IMR-90 (cell line): ENCODE measurements at regions of chr13 and their contacts with region 1.

Region 1: DNA sequence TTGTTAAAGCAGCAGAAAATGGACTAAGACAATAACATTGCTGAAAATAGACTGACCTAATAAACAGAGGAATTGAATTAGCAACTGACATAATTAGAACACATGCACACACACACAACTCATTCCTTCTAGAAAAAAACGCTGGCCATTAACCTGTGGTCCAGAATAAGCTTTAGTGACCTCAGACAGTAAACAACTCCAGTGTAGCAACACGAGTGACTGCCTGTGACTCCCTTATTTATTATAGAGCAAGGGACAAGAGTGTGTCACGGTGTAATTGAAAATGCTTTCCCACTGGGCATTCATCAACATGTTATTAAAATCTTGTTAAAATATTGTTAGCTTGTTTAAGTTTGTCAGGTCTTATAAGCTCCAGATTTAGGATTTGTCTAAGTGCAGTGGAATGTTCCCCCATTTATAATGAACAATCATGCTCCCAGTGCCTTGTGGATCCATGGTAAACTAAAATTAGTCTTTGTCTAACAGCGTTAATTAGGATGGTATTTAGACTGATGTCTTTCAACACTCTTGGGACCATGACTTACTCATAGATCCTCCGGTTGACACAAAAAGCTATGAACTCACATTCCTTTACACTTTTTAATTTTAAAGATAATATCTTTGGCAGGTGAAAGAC is 111.7 kb upstream of the IRS2 start:
- DNase-seq: no peak
- ATAC-seq: no peak
- H3K4me3 ChIP-seq: no peak overlapping the region
- H3K27ac ChIP-seq: no peak overlapping the region
- H3K4me1 ChIP-seq: no peaks in the 10 kb centered on the region
- H3K27me3 ChIP-seq: no peaks in the 10 kb centered on the region; the same call in 1 of the 2 replicates
- CTCF ChIP-seq: no peak
- POLR2A ChIP-seq: no peak
- RAD21 ChIP-seq: no peak

Region 2: DNA sequence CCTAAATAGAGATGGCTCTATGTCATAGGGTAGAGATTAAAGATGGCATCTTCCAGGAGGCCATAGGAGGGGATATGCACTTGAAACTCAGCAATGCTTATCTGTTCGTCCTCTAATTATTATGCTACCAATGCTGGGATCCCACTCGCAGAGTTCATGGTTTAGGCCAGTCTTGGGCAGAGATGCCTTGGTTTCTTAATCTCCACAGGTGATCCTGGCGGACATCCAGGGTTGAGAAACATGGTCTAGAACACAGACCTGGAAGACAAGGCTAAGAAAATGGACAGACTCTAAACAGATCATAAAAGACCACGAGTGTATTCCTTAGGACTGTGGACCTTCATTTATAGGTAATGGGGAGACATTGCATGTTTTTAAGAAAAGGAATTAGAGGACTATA is 41.8 kb before region 1 on chr13:
- CTCF ChIA-PET with region 1: no interaction called
- POLR2A ChIA-PET with region 1: no interaction called
- dilution Hi-C with region 1: no loop called
- in situ Hi-C with region 1: no loop called
- intact Hi-C with region 1: loop called (anchors 1 kb)
- DNase-seq: no peak
- ATAC-seq: no peak
- H3K4me3 ChIP-seq: no peak overlapping the region
- H3K27ac ChIP-seq: no peak overlapping the region
- H3K4me1 ChIP-seq: no peaks in the 10 kb centered on the region
- H3K27me3 ChIP-seq: peaks cover 11% of the 10 kb centered on the region
- CTCF ChIP-seq: no peak
- POLR2A ChIP-seq: no peak
- RAD21 ChIP-seq: no peak

Region 3: DNA sequence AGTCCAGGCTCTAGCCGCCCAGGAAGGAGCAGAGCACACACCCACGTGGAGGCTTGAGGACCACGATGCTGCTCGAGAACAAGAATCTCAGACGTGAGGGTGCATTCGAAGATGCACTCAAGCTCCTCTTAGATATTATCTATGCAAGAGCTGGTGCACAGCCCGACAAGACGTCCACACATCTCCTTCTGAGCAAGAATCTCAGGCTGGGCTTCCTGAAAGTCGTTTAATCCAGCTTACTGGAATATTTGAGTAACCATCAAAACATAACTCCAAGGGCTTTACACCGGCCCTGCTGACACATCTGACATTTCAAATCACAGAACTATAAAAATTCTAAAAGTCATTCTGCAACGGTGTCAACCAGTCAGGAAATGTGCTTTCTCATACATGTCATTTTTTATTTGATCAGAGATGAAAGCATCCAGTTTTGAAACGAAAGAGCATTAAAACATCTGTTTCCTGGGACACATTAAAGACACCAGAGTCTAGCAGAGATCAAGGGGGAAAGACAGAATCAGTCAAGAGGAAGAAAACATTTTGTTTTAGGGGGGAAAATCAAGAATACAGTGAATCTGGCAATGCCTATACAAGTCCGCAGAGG is 66.0 kb after region 1 on chr13:
- CTCF ChIA-PET with region 1: no interaction called
- POLR2A ChIA-PET with region 1: no interaction called
- dilution Hi-C with region 1: no loop called
- in situ Hi-C with region 1: no loop called
- intact Hi-C with region 1: no loop called
- DNase-seq: no peak
- ATAC-seq: no peak
- H3K4me3 ChIP-seq: no peak overlapping the region
- H3K27ac ChIP-seq: no peak overlapping the region
- H3K4me1 ChIP-seq: no peaks in the 10 kb centered on the region
- H3K27me3 ChIP-seq: no peaks in the 10 kb centered on the region
- CTCF ChIP-seq: no peak
- POLR2A ChIP-seq: no peak
- RAD21 ChIP-seq: no peak

Region 4: GRCh38 chr13:110089815-110090214 is 191.7 kb after region 1 on chr13:
- CTCF ChIA-PET with region 1: no interaction called
- POLR2A ChIA-PET with region 1: no interaction called
- dilution Hi-C with region 1: no loop called
- in situ Hi-C with region 1: no loop called
- intact Hi-C with region 1: loop called (anchors 10 kb)
- DNase-seq: no peak
- ATAC-seq: no peak
- H3K4me3 ChIP-seq: no peak overlapping the region
- H3K27ac ChIP-seq: no peak overlapping the region
- H3K4me1 ChIP-seq: peaks cover 1% of the 10 kb centered on the region
- H3K27me3 ChIP-seq: no peaks in the 10 kb centered on the region
- CTCF ChIP-seq: peak; percentile 31
- POLR2A ChIP-seq: no peak
- RAD21 ChIP-seq: no peak

Region 5: DNA sequence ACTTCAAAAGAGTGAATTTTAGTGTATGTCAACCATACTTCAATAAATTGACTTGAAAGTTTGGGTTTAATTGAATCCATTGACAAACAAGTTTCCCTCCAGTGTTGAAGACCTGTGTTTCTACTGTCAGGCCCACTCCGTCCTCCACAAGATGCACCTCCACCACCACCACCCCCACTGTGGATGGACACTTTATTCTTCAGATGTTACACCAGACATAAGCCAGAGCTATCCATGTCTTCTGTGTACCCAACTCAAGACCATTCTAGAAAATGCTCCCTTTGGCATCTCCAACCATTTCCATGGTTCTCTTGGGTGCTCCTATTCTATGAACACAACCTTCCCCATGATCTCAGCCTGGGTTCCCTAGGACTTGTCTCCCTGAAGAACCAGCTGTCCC is 201.8 kb after region 1 on chr13:
- CTCF ChIA-PET with region 1: no interaction called
- POLR2A ChIA-PET with region 1: no interaction called
- dilution Hi-C with region 1: no loop called
- in situ Hi-C with region 1: no loop called
- intact Hi-C with region 1: no loop called
- DNase-seq: no peak
- ATAC-seq: no peak
- H3K4me3 ChIP-seq: no peak overlapping the region
- H3K27ac ChIP-seq: no peak overlapping the region
- H3K4me1 ChIP-seq: peaks cover 1% of the 10 kb centered on the region
- H3K27me3 ChIP-seq: no peaks in the 10 kb centered on the region
- CTCF ChIP-seq: no peak
- POLR2A ChIP-seq: no peak
- RAD21 ChIP-seq: no peak